HCT116 (cell line): ENCODE measurements at regions of chr22 and their contacts with region 1.

Region 1: GRCh38 chr22:43385770-43386641 is 25.8 kb upstream of the MPPED1 start:
- DNase-seq: peak; percentile 32
- ATAC-seq: peak; percentile 86
- H3K4me3 ChIP-seq: 0 out of 4 replicates have a peak overlapping the region, but pooled peaks of 1 of the 2 experiments have one; percentile 7
- H3K27ac ChIP-seq: no peak overlapping the region
- H3K4me1 ChIP-seq: peaks cover 0 to 3% of the 10 kb centered on the region in 2 experiments; a peak in 1 of 4 replicates
- H3K27me3 ChIP-seq: no peaks in the 10 kb centered on the region
- CTCF ChIP-seq: peak; percentile 89 to 90 (median 89)
- POLR2A ChIP-seq: no peak
- RAD21 ChIP-seq: peak; percentile 93

Region 2: GRCh38 chr22:43230971-43231723 is 154.9 kb before region 1 on chr22:
- CTCF ChIA-PET with region 1: interaction called, 34 read pairs
- POLR2A ChIA-PET with region 1: no interaction called
- RAD21 ChIA-PET with region 1: no interaction called
- intact Hi-C with region 1: loop called (anchors 1 kb)
- DNase-seq: peak; percentile 51
- ATAC-seq: peak; percentile 83
- H3K4me3 ChIP-seq: no peak overlapping the region
- H3K27ac ChIP-seq: no peak overlapping the region
- H3K4me1 ChIP-seq: peaks cover 0 to 7% of the 10 kb centered on the region in 2 experiments; a peak in 1 of 4 replicates
- H3K27me3 ChIP-seq: no peaks in the 10 kb centered on the region
- CTCF ChIP-seq: peak; percentile 95 to 98 (median 97)
- POLR2A ChIP-seq: no peak
- RAD21 ChIP-seq: peak; percentile 90

Region 3: DNA sequence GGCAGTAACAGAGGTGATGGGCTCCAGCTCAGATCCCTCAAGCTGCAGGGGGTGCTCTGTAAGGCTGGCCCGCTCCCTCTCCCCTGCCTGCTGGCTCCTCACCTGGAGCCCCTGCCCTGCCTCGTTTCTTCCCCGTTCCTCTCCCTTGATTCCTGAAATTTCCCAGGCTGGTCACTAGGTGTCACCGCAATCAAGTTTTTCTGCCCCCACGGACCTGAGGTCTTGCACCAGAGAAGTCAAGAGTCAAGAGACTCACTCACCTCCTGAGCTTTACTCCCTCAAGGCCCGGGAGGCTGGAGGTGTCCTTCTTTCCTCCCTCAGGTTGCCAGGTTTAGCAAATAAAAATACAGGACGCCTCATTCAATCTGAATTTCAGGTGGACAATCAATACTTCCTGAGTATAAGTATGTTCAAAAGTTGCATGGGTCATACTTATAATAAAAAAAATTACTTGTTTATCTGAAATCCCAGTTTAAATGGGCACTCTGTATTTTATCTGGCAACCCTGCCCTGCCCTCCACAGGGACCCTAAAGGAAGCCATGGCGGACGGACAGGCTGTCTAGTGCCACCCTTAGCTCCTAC is 112.0 kb before region 1 on chr22:
- CTCF ChIA-PET with region 1: interaction called, 48 read pairs
- POLR2A ChIA-PET with region 1: no interaction called
- RAD21 ChIA-PET with region 1: interaction called in 1 of 2 experiments, 3 read pairs
- intact Hi-C with region 1: loop called (anchors 1 kb)
- DNase-seq: peak; percentile 47
- ATAC-seq: peak; percentile 81
- H3K4me3 ChIP-seq: no peak overlapping the region
- H3K27ac ChIP-seq: no peak overlapping the region
- H3K4me1 ChIP-seq: peaks cover 18 to 39% of the 10 kb centered on the region in 2 experiments
- H3K27me3 ChIP-seq: no peaks in the 10 kb centered on the region
- CTCF ChIP-seq: peak; percentile 70 to 81 (median 76)
- POLR2A ChIP-seq: no peak
- RAD21 ChIP-seq: peak; percentile 88

Region 4: DNA sequence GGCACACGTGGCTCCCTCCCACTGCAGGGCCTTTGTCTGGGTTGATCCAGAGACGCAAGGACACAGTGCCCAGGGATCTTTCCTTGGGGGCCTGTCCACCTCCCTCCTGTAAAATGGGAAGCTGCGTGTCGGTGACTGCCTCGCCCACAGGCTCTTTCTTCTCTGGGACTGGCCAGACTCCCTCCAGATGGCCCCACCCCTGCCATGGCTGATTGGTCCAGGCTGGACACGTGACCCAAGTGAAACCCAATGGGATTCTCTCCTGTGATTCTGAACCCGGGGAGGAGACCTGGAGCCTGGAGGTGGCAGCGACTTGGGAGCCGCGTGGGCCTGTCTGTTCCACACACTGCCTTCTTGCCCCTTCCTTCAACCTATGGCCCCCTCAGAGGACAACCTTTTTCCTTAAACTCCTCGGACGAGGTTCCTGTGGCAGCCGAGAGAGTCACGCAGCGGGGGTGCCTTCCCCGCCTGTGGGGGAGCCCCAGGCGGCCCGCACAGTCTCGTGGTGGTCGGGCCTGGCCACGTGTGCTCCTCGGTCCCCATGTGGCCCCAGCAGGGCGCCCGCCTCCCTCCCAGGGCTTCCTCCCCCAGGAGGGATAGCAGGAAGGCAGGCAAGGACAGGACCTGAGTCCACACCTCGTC is 13.5 kb after region 1 on chr22:
- CTCF ChIA-PET with region 1: no interaction called
- POLR2A ChIA-PET with region 1: no interaction called
- RAD21 ChIA-PET with region 1: no interaction called
- intact Hi-C with region 1: no loop called
- DNase-seq: no peak
- ATAC-seq: peak; percentile 77
- H3K4me3 ChIP-seq: no peak overlapping the region
- H3K27ac ChIP-seq: no peak overlapping the region
- H3K4me1 ChIP-seq: peaks cover 0 to 4% of the 10 kb centered on the region in 2 experiments; a peak in 1 of 4 replicates
- H3K27me3 ChIP-seq: no peaks in the 10 kb centered on the region
- CTCF ChIP-seq: no peak
- POLR2A ChIP-seq: no peak
- RAD21 ChIP-seq: no peak

Region 5: GRCh38 chr22:43743131-43743530 is 357.1 kb after region 1 on chr22:
- CTCF ChIA-PET with region 1: no interaction called
- POLR2A ChIA-PET with region 1: no interaction called
- RAD21 ChIA-PET with region 1: no interaction called
- intact Hi-C with region 1: loop called (anchors 1 kb)
- DNase-seq: no peak
- ATAC-seq: peak; percentile 54; the same call in 1 of the 2 replicates
- H3K4me3 ChIP-seq: no peak overlapping the region
- H3K27ac ChIP-seq: no peak overlapping the region
- H3K4me1 ChIP-seq: no peaks in the 10 kb centered on the region
- H3K27me3 ChIP-seq: peaks cover 52% of the 10 kb centered on the region
- CTCF ChIP-seq: peak in 2 of 3 experiments; percentile 43 to 50; a peak in 4 of 6 replicates
- POLR2A ChIP-seq: no peak
- RAD21 ChIP-seq: peak; percentile 45

Region 6: GRCh38 chr22:43802897-43803495 is 417.0 kb after region 1 on chr22:
- CTCF ChIA-PET with region 1: no interaction called
- POLR2A ChIA-PET with region 1: no interaction called
- RAD21 ChIA-PET with region 1: no interaction called
- intact Hi-C with region 1: loop called (anchors 5 kb)
- DNase-seq: no peak
- ATAC-seq: no peak
- H3K4me3 ChIP-seq: no peak overlapping the region
- H3K27ac ChIP-seq: no peak overlapping the region
- H3K4me1 ChIP-seq: no peaks in the 10 kb centered on the region
- H3K27me3 ChIP-seq: peaks cover 73% of the 10 kb centered on the region
- CTCF ChIP-seq: no peak
- POLR2A ChIP-seq: no peak
- RAD21 ChIP-seq: no peak

Region 7: DNA sequence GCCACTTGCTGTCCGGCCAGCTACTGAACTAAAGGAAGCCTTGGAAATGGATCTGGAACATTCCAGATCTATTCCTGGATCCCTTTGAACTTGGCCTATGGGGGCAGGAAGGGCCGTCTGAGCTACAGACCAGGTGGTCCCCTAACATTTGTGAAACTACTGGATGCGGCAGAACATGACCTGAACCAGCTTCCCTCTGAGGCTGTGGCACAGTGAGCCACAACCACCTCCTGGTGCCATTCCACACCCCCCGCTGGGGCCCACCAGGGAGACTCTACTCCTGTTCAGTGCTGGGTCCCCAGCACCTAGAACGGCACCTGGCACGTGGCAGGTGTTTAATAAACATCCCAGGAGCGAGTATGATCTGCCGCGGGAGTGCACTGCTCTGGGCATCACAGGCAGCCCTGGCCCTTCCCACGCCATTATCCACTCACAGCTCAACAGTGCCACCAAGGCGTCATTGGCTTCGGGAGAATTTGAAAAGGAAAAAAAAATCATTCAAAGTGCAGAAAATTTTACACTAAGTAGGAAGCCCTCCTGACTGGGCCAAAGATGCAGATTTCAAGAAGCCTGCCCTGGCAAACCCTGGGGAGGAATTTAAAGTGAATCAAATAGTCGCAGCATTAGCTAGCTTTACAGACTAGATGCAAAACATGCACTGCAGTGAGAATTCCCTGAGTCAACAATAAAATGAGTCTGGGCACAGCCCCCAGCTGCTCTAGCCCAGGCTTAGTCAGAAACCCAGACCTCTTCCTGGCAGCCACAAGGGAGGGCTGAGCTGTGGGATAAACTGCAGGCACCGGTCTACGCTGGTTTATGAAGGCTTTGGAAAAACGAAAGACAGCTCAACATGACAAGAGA is 440.4 kb after region 1 on chr22:
- CTCF ChIA-PET with region 1: interaction called, 3 read pairs
- POLR2A ChIA-PET with region 1: no interaction called
- RAD21 ChIA-PET with region 1: interaction called in 1 of 2 experiments, 3 read pairs
- intact Hi-C with region 1: loop called (anchors 1 kb)
- DNase-seq: no peak
- ATAC-seq: peak; percentile 68
- H3K4me3 ChIP-seq: no peak overlapping the region
- H3K27ac ChIP-seq: no peak overlapping the region
- H3K4me1 ChIP-seq: no peaks in the 10 kb centered on the region
- H3K27me3 ChIP-seq: 0 out of 2 replicates have a peak, but pooled peaks cover 4% of the 10 kb centered on the region
- CTCF ChIP-seq: peak; percentile 26 to 35 (median 35); a peak in 3 of 6 replicates
- POLR2A ChIP-seq: no peak
- RAD21 ChIP-seq: peak; percentile 46

Region 8: DNA sequence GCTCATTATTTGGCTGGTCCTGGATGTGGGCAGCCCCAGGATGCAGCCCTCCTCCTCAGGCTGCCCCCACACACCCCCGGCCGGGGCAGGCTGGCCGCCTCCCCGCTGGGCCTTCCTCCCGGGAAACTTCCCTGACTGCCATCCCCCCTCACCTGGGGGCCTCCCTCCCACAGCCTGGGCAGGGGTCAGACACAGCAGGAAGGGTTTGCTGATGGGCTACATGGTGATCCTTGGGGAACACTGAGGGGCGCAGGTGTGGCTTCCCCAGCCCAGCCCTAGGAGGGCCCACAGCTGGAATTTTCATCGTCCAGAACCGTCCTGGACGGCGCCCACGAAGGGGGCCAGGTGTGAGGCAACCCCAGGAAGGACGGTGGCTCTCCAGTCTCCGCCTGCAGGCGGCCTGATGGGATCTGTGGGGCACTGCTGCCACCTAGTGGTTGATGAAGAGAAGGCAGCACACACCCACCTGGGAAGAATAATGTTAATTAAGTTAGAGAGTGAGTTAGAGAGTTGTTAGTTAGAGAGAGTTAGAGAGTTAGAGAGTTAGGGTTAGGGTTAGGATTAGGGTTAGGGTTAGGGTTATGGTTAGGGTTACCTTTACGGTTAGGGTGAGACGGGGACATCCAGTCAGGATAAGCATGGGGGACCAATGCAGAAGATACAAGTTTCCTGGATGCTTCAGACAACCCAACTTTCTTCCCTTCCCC is 1240.1 kb after region 1 on chr22:
- CTCF ChIA-PET with region 1: no interaction called
- POLR2A ChIA-PET with region 1: no interaction called
- RAD21 ChIA-PET with region 1: no interaction called
- intact Hi-C with region 1: loop called (anchors 1 kb)
- DNase-seq: peak; percentile 38
- ATAC-seq: peak; percentile 81
- H3K4me3 ChIP-seq: no peak overlapping the region
- H3K27ac ChIP-seq: no peak overlapping the region
- H3K4me1 ChIP-seq: peaks cover 0 to 4% of the 10 kb centered on the region in 2 experiments; a peak in 1 of 4 replicates
- H3K27me3 ChIP-seq: no peaks in the 10 kb centered on the region
- CTCF ChIP-seq: peak; percentile 88 to 98 (median 94)
- POLR2A ChIP-seq: no peak
- RAD21 ChIP-seq: peak; percentile 92